ENCODE measurements at regions of chr11 and their contacts with region 1.

Region 1: GRCh38 chr11:21415606-21416005 is 746.2 kb downstream of the NELL1 start:
- DNase-seq: no peak
- H3K4me3 ChIP-seq: no peak overlapping the region
- H3K27ac ChIP-seq: no peak overlapping the region
- H3K4me1 ChIP-seq: no peaks in the 10 kb centered on the region
- H3K27me3 ChIP-seq: no peaks in the 10 kb centered on the region
- CTCF ChIP-seq: no peak

Region 2: DNA sequence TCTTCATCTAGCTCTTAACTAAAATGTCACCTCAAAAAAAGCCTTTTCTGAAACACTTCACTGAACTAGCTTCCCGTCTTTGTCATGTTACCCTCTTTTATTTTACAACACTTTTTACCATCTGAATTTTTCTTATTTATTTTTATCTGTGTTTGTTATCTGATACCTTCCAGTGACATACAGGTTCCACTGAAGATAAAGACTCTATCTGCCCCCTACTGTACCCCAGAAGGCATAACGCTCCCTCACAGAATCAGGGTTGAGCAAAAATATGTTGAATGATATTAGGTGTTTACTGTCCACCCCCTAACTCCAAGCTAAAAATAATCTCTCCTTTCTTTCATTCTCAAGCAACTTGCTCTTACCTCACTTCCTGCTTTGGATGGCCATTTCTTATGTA is 92.0 kb before region 1 on chr11:
- CTCF ChIA-PET with region 1: no interaction called
- POLR2A ChIA-PET with region 1: no interaction called
- intact Hi-C with region 1: loop called (anchors 2 kb)
- DNase-seq: no peak
- H3K4me3 ChIP-seq: no peak overlapping the region
- H3K27ac ChIP-seq: no peak overlapping the region
- H3K4me1 ChIP-seq: no peaks in the 10 kb centered on the region
- H3K27me3 ChIP-seq: no peaks in the 10 kb centered on the region
- CTCF ChIP-seq: no peak

Measured in PC-9 (cell line).